Mammary epithelial cell (primary cell): ENCODE measurements at regions of chr1 and their contacts with region 1.

Region 1: DNA sequence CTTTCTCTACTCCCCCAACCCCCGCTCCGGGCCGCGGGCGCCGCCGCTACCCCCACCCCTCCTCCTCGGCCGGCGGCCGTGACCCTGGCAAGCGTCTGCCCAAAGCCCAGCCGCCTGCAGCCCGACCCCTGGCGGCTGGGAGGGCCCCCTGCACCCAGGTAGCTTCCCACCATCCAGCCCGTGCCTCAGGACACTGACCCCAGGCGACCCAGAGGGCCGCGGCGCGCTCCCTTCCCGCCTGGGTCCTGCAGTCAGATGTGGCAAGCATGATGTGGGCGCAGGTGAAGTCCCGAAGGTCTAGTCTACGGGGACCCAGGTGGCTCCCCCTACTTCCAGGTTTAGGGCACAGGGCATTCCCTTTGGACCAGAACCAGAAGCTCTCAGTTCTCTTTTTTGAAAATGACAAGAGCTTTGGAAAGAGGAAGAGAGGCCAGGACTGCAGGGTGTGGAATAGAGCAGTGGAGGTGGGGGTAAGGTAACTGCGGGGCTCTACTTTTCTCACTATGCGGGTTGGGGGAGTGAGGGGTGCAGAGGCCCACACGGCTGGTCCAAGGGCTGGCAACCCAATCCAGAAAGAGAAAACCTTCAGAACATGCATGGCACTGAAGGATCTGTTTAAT is at the start of gene DENND4B:
- DNase-seq: peak; percentile 64
- H3K4me3 ChIP-seq: peak within 1 kb of the TSS; percentile 71 to 88 (median 79)
- H3K27ac ChIP-seq: peak within 1 kb of the TSS; percentile 65
- H3K4me1 ChIP-seq: peaks cover 8% of the 10 kb centered on the region
- H3K27me3 ChIP-seq: no peaks in the 10 kb centered on the region
- CTCF ChIP-seq: peak; percentile 72 to 90
- total RNA-seq, gene DENND4B: 12.3 to 36.9 TPM

Region 2: DNA sequence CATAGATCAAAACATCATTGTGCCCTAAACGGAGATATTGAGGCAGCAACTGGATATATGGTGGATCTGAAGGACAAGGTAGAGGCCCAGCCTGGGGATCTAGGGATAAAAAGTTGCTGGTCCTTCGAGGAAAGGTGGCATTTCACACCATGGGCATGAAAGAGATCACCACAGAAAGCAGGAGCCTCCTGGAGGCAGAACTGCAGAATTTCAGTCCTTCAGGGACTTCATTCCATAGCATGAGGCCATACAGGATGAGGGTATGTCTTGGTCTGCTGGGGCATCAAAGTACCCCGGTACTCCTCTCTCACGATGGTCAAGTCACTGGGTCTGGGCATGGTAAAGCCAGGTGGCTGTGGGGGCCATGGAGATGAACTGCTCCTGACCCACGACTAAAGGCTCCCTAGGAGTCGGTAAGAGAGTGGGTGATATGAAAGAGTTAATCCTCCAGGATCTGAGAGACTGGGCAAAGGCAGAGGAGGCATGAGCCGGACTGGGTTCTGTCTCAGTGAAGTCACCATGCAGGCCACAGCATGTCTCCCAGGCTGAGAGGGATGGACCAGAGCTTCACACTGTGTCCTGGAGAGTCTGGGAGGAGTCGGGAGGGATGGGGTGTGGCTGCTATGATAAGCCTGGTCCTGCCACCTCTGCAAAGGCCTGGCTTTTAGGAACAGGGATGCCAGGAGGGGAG is 1005.6 kb before region 1 on chr1:
- CTCF ChIA-PET with region 1: no interaction called
- dilution Hi-C with region 1: no loop called
- in situ Hi-C with region 1: no loop called
- intact Hi-C with region 1: no loop called
- DNase-seq: peak; percentile 90
- H3K4me3 ChIP-seq: no peak overlapping the region
- H3K27ac ChIP-seq: peak overlapping the region; percentile 55
- H3K4me1 ChIP-seq: peaks cover 18% of the 10 kb centered on the region
- H3K27me3 ChIP-seq: no peaks in the 10 kb centered on the region
- CTCF ChIP-seq: peak; percentile 25 to 41

Region 3: DNA sequence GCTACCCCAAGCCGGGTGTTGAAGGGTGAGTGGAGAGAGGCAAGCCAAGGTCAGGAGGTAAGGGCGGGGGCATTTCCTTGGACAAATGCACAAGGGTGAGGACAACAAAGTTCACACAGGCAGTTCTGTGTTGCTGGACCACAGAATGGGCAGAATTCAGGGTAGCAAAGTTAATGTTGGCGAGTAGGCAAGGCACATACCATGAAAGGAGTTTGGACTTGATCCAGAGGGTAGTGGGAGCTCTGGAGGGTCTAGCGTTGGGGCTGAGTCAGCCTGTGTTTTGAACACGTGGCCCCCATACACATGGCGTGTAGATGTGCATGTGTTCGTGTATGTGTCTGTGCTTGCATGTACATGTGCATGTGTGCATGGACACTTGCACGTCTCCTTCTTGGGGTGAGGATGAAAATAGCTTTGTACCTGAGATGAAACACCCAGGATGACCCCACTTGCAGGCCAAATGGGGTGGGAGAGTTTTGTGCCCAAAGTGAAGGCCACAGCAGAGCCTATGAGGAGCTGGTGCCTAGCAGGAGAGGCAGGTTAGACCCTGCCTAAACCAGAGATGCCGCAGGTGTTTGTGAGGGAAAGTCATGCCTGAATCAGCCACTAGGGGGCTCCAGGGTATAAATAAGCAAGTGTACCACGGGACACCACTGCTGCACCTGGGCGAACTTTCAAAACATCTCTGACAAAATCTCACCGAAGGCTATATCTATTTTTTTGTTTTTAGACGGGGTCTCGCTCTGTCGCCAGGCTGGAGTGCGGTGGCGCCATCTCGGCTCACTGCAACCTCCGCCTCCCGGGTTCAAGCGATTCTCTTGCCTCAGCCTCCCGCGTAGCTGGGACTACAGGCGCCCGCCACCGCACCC is 149.7 kb before region 1 on chr1:
- CTCF ChIA-PET with region 1: no interaction called
- dilution Hi-C with region 1: no loop called
- in situ Hi-C with region 1: no loop called
- intact Hi-C with region 1: loop called (anchors 1 kb)
- DNase-seq: peak; percentile 59
- H3K4me3 ChIP-seq: no peak overlapping the region
- H3K27ac ChIP-seq: no peak overlapping the region
- H3K4me1 ChIP-seq: no peaks in the 10 kb centered on the region
- H3K27me3 ChIP-seq: no peaks in the 10 kb centered on the region
- CTCF ChIP-seq: peak; percentile 88 to 90

Region 4: GRCh38 chr1:153816283-153816889 is 130.3 kb before region 1 on chr1:
- CTCF ChIA-PET with region 1: interaction called, 6 read pairs
- dilution Hi-C with region 1: no loop called
- in situ Hi-C with region 1: no loop called
- intact Hi-C with region 1: loop called (anchors 1 kb)
- DNase-seq: no peak
- H3K4me3 ChIP-seq: no peak overlapping the region
- H3K27ac ChIP-seq: no peak overlapping the region
- H3K4me1 ChIP-seq: no peaks in the 10 kb centered on the region
- H3K27me3 ChIP-seq: no peaks in the 10 kb centered on the region
- CTCF ChIP-seq: no peak

Region 5: DNA sequence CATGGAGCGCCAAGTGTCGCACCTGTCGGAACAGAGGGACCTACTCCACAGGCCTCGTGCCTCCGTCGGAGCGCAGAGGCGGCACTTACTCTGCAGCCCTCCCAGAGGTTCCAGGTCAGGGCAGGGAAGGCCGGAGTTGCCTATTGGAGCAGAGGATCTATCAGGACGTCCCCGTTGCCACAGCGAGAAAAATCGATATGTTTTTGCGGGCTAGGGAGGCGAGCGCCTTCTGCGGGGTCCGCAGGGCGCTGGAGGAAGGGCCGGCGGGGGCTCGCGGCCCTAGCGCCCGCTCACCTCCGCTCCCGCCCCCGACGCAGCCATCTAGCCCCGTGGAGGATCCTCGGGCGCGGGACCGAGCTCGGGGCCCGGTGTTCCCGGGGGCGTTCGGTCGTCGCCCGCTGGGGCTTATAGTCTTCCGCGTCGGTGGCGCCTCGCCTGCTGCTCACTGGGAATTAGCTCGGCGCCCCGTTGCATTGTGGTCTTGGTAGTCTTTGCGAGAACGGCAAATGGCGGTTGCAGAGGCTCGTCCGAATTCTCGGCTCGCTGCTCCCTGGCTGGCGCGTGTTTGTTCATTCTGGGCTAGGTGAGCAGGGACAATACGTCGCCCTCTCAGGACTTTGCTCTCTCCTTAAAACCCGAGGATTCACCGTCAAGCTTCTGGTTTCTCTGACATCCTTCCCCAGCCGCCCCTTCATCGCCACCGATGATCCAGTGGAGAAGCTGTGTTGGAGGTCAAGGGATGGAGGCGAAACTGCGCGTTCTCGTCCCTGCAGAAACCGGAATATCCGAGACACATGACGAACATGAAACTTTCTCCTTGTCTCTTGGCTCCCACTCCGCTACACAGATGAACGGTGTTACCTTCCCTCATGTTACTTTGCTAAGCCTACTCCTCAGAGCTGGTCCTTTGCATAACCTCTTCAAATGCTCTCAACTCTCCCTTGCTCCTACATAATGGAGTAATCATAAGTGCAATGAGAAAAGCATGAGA is 30.8 kb after region 1 on chr1 and contains the start of gene JTB:
- CTCF ChIA-PET with region 1: no interaction called
- dilution Hi-C with region 1: no loop called
- in situ Hi-C with region 1: no loop called
- intact Hi-C with region 1: loop called (anchors 1 kb)
- DNase-seq: peak; percentile 77
- H3K4me3 ChIP-seq: peak within 1 kb of the TSS; percentile 51 to 93 (median 71)
- H3K27ac ChIP-seq: peak within 1 kb of the TSS; percentile 51
- H3K4me1 ChIP-seq: peaks cover 10% of the 10 kb centered on the region
- H3K27me3 ChIP-seq: no peaks in the 10 kb centered on the region
- CTCF ChIP-seq: no peak
- total RNA-seq, gene JTB: 58.7 to 60.5 TPM